Activated CD4-positive, alpha-beta memory T cell treated with anti-CD3 and anti-CD28 coated beads for 36 hours (primary cell): ENCODE measurements at regions of chr2 and their contacts with region 1.

Region 1: DNA sequence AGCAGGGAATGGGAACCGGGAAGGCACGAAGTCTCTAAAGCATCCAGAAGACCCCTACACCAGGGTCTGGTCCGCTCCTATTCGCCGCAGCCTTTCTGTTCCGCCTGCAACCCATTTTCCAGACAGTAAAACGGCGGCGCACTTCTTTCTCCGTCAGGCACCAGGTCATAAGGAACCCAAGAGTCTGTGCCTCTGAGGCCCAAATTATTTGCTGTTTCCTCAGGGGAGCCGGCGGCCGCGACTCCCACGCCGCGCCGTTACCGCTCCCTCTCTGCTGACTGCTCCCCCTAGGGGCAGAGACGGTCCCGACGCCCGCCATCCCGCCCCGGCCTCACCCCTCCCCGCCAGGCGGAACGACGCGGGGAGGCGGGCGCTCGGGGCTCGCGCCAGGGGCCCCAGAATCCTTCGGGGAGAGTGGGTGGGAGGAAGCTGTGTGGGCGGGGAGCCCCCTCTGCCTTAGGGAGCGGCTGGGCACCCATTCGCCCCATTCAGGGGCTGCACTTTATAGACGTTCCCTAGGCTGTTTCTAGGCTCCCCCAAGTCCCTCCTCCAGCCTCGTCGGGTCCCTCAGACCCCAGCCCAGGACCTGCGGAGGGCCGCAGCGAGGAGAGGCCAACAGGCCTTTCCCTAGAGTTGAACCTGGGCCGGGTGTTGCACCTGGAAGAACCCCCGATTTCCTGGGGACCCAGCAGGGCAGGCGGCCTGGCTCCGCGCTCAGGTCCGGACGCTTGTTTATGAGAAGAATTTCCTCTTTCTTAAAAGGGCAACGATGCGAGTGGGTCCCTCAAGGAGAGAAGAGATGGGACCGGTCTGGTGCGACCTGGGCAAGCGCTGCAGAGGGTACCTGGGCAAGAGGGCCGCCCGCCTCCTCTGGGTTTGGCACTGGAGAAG is 3.6 kb upstream of the CTDSP1 start:
- DNase-seq: peak; percentile 96
- H3K4me3 Mint-ChIP-seq: peak overlapping the region; percentile 90
- H3K27ac Mint-ChIP-seq: peak overlapping the region; percentile 88
- H3K4me1 Mint-ChIP-seq: peaks cover 34% of the 10 kb centered on the region
- H3K27me3 Mint-ChIP-seq: no peaks in the 10 kb centered on the region

Region 2: DNA sequence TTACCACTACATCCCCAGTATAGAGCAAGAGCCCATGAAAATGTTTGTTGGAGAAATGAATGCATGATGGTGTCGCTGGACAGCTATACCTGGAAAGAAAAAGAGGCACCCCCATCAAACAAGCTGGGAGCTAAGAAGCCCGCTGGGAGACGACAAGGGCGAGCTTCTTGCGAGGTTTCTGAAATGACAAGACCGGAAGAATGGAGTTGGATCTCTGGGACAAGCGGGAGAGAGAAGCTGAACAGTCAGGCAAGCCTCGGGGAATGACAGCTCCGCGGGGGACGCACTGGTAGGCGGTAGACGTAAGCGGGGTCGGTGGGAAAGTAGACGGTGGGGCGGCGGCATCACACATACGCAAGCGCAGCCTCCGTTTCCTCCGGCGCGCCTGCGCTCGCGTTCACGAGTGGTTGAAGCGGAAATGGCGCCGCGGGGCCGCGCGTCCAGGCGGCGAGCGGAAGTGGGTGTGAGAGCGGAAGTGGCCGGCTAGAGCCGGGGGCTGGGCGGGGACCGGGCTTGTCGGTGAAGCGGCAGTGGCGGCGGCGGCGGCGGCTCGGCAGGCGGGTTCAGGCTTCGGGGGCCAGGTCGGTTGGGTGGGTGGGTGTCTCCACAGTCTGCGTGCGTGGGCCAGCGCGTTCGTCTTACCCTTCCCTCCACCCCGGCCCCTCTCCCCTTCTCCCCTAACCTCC is 179.2 kb before region 1 on chr2 and contains the start of gene ARPC2:
- CTCF ChIA-PET with region 1: no interaction called
- POLR2A ChIA-PET with region 1: no interaction called
- intact Hi-C with region 1: loop called (anchors 2 kb)
- DNase-seq: peak; percentile 97
- H3K4me3 Mint-ChIP-seq: peak within 1 kb of the TSS; percentile 83
- H3K27ac Mint-ChIP-seq: peak within 1 kb of the TSS; percentile 91
- H3K4me1 Mint-ChIP-seq: peaks cover 34% of the 10 kb centered on the region
- H3K27me3 Mint-ChIP-seq: no peaks in the 10 kb centered on the region
- total RNA-seq, gene ARPC2: 564 to 570 TPM

Region 3: GRCh38 chr2:218301176-218301819 is 94.7 kb before region 1 on chr2:
- CTCF ChIA-PET with region 1: interaction called, 10 read pairs
- POLR2A ChIA-PET with region 1: no interaction called
- intact Hi-C with region 1: loop called (anchors 1 kb)
- DNase-seq: peak; percentile 92
- H3K4me3 Mint-ChIP-seq: no peak overlapping the region
- H3K27ac Mint-ChIP-seq: peak overlapping the region; percentile 42
- H3K4me1 Mint-ChIP-seq: peaks cover 5% of the 10 kb centered on the region
- H3K27me3 Mint-ChIP-seq: no peaks in the 10 kb centered on the region

Region 4: GRCh38 chr2:218568190-218569037 is 172.4 kb after region 1 on chr2 and contains the starts of genes CNOT9 and USP37:
- CTCF ChIA-PET with region 1: no interaction called
- POLR2A ChIA-PET with region 1: interaction called, 3 read pairs
- intact Hi-C with region 1: loop called (anchors 1 kb)
- DNase-seq: peak; percentile 100
- H3K4me3 Mint-ChIP-seq: peak within 1 kb of the TSS; percentile 96
- H3K27ac Mint-ChIP-seq: peak within 1 kb of the TSS; percentile 100
- H3K4me1 Mint-ChIP-seq: peaks cover 54% of the 10 kb centered on the region
- H3K27me3 Mint-ChIP-seq: no peaks in the 10 kb centered on the region
- total RNA-seq, gene CNOT9: 84.7 to 87.3 TPM
- total RNA-seq, gene USP37: 27.2 to 28.7 TPM

Region 5: DNA sequence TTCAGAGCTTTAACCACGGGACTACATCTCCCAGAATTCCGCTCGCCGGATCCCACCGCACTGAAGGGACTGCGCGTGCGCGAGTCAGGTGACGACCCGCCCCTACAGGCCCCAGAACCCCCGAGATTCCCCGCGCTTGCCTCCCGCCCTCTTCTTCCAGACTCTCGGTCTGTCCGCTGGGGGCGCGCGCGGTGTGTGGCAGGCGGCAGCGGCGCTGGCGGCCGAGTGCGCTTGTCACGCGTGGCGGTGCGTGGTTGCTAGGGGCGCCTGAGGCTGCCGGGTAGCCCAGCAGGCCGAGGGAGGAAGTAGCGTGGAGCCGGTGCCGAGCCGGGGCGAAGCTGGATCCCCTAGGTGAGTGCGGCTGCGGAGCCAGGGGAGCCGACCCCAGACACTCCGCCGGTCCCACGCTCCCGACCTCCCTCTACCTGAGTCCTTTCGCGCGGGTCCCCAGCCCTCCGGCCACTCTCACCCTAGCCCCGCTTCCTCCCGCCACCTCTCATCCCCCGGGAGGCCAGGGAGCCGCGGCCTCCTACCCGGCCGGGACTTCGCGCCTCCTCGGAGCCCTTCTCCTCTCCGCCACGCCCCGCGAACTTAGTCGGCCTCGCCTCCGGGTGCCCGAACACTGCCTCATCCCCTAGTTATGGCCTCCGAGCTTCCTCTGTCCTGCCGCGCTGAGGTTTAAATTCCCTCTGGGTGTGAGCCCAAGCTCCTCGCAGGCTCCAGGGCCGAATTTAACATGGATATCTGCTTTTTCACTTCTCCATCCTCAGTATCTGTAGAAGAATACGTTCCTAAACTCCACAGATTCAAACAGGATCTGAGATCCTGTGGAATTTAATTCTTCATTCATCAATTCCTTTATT is 314.9 kb after region 1 on chr2 and contains the start of gene TTLL4:
- CTCF ChIA-PET with region 1: no interaction called
- POLR2A ChIA-PET with region 1: no interaction called
- intact Hi-C with region 1: loop called (anchors 1 kb)
- DNase-seq: peak; percentile 99
- H3K4me3 Mint-ChIP-seq: peak within 1 kb of the TSS; percentile 88
- H3K27ac Mint-ChIP-seq: peak within 1 kb of the TSS; percentile 72
- H3K4me1 Mint-ChIP-seq: peaks cover 20% of the 10 kb centered on the region
- H3K27me3 Mint-ChIP-seq: no peaks in the 10 kb centered on the region
- total RNA-seq, gene TTLL4: 30.1 to 32.1 TPM

Region 6: GRCh38 chr2:219245148-219245898 is 849.3 kb after region 1 on chr2 and contains the starts of genes GLB1L and STK16:
- CTCF ChIA-PET with region 1: no interaction called
- POLR2A ChIA-PET with region 1: no interaction called
- intact Hi-C with region 1: loop called (anchors 5 kb)
- DNase-seq: peak; percentile 95
- H3K4me3 Mint-ChIP-seq: peak within 1 kb of the TSS; percentile 98
- H3K27ac Mint-ChIP-seq: peak within 1 kb of the TSS; percentile 98
- H3K4me1 Mint-ChIP-seq: peaks cover 61% of the 10 kb centered on the region
- H3K27me3 Mint-ChIP-seq: no peaks in the 10 kb centered on the region
- total RNA-seq, gene GLB1L: 4.8 to 4.9 TPM
- total RNA-seq, gene STK16: 37.1 to 37.8 TPM